K562 (cell line): ENCODE measurements at regions of chr2 and their contacts with region 1.

Region 1: GRCh38 chr2:10122386-10123280 is at the start of gene RRM2:
- DNase-seq: peak; percentile 95 to 98 (median 96)
- ATAC-seq: peak; percentile 87
- H3K4me3 ChIP-seq: peak within 1 kb of the TSS; percentile 84
- H3K27ac ChIP-seq: peak within 1 kb of the TSS; percentile 99
- H3K4me1 ChIP-seq: peaks cover 24 to 29% of the 10 kb centered on the region in 2 experiments
- H3K27me3 ChIP-seq: no peaks in the 10 kb centered on the region
- CTCF ChIP-seq: no peak
- EP300 ChIP-seq: no peak
- POLR2A ChIP-seq: peak; percentile 99
- RAD21 ChIP-seq: no peak
- polyA plus RNA-seq, gene RRM2: 50.1 to 50.7 TPM

Region 2: DNA sequence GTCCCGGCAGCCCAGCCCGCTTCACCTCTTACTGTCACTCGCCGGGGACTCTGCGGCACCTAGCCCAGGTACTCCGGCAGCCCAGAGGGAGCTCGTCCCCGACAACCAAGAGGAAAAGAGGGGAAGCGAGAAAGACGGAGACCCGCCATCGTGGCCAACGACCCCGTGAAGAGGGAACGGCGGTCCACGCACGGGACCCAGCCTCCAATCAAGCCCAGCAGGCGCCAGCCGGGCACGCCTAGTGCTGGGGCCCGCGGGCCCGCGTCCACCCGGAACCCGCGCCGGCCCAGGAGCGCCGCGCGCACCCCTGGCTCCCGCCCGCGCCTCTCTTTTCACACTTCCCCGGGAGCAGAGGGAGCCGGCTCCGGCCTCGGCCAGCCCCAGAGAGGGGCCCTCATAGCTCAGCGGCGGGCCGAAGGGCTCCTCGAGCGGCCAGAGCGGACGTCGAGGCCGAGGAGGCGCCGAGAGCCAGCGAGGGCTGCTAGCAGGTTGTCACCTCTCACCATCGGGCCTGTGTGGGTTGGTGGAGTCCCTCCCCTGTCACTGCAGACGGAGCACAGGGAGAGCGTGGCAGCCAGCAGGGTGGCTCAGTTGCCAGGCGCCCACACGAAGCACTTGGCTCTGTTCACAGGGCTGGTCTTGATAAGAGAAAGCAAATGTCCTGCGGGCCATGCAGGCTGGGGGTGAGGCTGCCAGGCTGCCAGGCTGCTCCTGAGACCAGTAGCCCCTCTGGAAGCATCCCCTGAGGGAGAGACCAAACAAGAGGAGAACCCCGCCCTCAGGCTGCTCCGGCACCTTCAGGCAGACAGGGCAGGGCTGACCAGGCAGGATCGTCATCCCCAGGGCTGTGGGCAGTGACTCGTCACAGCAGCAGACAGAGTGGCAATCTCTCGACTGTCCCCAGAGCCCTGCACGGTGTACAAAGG is 116.1 kb before region 1 on chr2:
- CTCF ChIA-PET with region 1: no interaction called
- POLR2A ChIA-PET with region 1: no interaction called
- in situ Hi-C with region 1: no loop called
- intact Hi-C with region 1: no loop called
- DNase-seq: no peak
- ATAC-seq: no peak
- H3K4me3 ChIP-seq: no peak overlapping the region
- H3K27ac ChIP-seq: no peak overlapping the region
- H3K4me1 ChIP-seq: peaks cover 8 to 37% of the 10 kb centered on the region in 2 experiments
- H3K27me3 ChIP-seq: no peaks in the 10 kb centered on the region
- CTCF ChIP-seq: no peak
- EP300 ChIP-seq: no peak
- POLR2A ChIP-seq: no peak
- RAD21 ChIP-seq: no peak

Region 3: DNA sequence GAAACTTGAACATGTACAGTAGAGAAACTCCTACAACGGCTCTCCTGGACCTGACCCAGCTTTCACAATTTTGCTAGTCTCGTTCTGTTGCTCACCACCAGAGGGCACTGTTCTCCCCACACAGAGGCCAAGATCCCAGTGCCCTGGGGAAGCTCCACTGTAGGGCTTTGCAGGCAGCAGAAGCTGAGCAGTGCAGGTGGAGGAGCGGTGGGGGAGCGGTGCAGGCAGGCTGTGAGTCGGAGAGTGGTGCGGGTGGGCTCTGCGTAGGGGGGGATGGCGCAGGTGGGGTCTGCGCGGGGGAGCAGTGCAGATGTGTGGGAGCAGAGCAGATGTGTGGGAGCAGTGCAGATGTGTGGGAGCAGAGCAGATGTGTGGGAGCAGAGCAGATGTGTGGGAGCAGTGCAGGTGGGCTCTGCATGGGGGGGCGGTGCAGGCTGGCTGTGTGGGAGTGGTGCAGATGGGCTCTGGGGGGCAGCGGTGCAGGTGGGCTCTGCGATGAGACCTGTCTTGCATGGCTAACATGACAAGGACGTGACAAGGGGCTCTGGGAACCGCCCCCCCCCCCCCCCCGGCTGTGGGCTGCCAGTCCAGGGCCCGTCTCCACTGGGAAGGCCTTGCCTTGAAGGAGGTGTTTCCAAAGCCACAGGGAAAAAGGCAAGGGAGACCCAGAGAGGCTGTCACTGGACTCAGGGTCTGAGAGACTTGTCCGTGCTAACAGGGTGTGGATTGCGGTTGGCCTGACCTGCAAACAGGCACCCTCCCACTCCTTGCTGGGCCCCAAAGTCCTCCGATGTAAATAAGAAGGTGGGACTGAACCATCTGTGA is 49.8 kb before region 1 on chr2:
- CTCF ChIA-PET with region 1: interaction called, 4 read pairs
- POLR2A ChIA-PET with region 1: interaction called, 11 read pairs
- in situ Hi-C with region 1: no loop called
- intact Hi-C with region 1: loop called (anchors 2 kb)
- DNase-seq: peak; percentile 82 to 90 (median 84)
- ATAC-seq: peak; percentile 97
- H3K4me3 ChIP-seq: no peak overlapping the region
- H3K27ac ChIP-seq: no peak overlapping the region
- H3K4me1 ChIP-seq: peaks cover 2 to 11% of the 10 kb centered on the region in 2 experiments; a peak in 3 of 5 replicates
- H3K27me3 ChIP-seq: peaks cover 30 to 40% of the 10 kb centered on the region in 2 experiments
- CTCF ChIP-seq: peak; percentile 92 to 93 (median 93)
- EP300 ChIP-seq: no peak; the same call in 1 of the 2 replicates
- POLR2A ChIP-seq: no peak
- RAD21 ChIP-seq: peak; percentile 77 to 89

Region 4: DNA sequence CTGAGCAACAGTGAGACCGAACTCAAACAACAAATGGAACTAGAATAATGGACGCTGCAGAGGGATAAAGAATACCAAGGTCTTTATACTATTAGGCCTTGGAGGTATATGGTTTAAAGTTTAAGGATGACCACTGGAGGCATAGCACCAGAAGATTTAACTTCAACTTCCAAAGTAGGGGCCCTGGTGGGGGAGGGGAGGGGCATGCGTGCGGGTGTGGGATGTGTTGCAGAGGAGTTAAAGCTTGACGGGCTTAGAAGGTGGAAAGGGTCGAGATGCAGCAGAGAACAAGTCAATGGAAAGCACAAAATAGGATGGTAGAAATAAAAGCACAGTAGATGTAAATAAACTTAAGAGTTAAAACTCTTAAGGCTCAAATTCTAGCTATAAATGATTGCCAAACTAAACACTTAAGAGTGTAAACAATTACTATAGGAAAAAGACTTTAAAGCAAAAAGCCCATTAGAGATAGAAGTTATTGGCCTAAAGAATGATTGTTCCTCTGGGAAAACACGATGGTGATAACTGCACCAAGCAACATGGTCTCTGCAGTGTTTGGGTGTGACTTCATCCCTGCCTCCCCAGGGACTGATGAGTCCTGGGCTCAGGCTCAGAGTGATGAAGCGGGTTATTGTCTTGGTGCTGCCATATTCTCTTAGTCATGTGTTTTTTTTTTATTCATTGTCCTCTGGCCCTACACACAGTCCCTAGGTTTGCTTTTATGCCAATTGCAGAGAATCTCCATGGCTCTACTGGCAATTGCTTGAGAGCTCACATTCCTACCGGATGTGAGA is 12.9 kb after region 1 on chr2:
- CTCF ChIA-PET with region 1: no interaction called
- POLR2A ChIA-PET with region 1: interaction called, 44 read pairs
- in situ Hi-C with region 1: no loop called
- intact Hi-C with region 1: no loop called
- DNase-seq: peak; percentile 38 to 53 (median 48)
- ATAC-seq: peak; percentile 33
- H3K4me3 ChIP-seq: no peak overlapping the region
- H3K27ac ChIP-seq: no peak overlapping the region
- H3K4me1 ChIP-seq: peaks cover 15 to 28% of the 10 kb centered on the region in 2 experiments; a peak in 4 of 5 replicates
- H3K27me3 ChIP-seq: no peaks in the 10 kb centered on the region
- CTCF ChIP-seq: peak in 1 of 3 experiments; percentile 2; a peak in 1 of 6 replicates
- EP300 ChIP-seq: no peak
- POLR2A ChIP-seq: peak; percentile 67
- RAD21 ChIP-seq: no peak

Region 5: GRCh38 chr2:10201201-10201600 is 78.6 kb after region 1 on chr2:
- CTCF ChIA-PET with region 1: no interaction called
- POLR2A ChIA-PET with region 1: no interaction called
- in situ Hi-C with region 1: no loop called
- intact Hi-C with region 1: no loop called
- DNase-seq: no peak
- ATAC-seq: no peak
- H3K4me3 ChIP-seq: no peak overlapping the region
- H3K27ac ChIP-seq: no peak overlapping the region
- H3K4me1 ChIP-seq: peaks cover 0 to 2% of the 10 kb centered on the region in 2 experiments; a peak in 2 of 5 replicates
- H3K27me3 ChIP-seq: no peaks in the 10 kb centered on the region
- CTCF ChIP-seq: no peak
- EP300 ChIP-seq: no peak
- POLR2A ChIP-seq: no peak
- RAD21 ChIP-seq: no peak

Region 6: GRCh38 chr2:10302479-10303180 is 180.0 kb after region 1 on chr2 and contains the start of gene HPCAL1:
- CTCF ChIA-PET with region 1: interaction called, 4 read pairs
- POLR2A ChIA-PET with region 1: interaction called, 3 read pairs
- in situ Hi-C with region 1: no loop called
- intact Hi-C with region 1: loop called (anchors 5 kb)
- DNase-seq: peak; percentile 94 to 97 (median 96)
- ATAC-seq: peak; percentile 95
- H3K4me3 ChIP-seq: peak within 1 kb of the TSS; percentile 80
- H3K27ac ChIP-seq: peak within 1 kb of the TSS; percentile 94
- H3K4me1 ChIP-seq: peaks cover 51 to 56% of the 10 kb centered on the region in 2 experiments
- H3K27me3 ChIP-seq: no peaks in the 10 kb centered on the region
- CTCF ChIP-seq: peak; percentile 67 to 87 (median 78)
- EP300 ChIP-seq: peak; percentile 36
- POLR2A ChIP-seq: peak; percentile 36; the same call in 1 of the 2 replicates
- RAD21 ChIP-seq: peak; percentile 52 to 67
- polyA plus RNA-seq, gene HPCAL1: 2.7 to 3.1 TPM

Region 7: GRCh38 chr2:10659898-10660568 is 537.4 kb after region 1 on chr2:
- CTCF ChIA-PET with region 1: interaction called, 5 read pairs
- POLR2A ChIA-PET with region 1: no interaction called
- in situ Hi-C with region 1: no loop called
- intact Hi-C with region 1: loop called (anchors 1 kb)
- DNase-seq: peak; percentile 55 to 76 (median 67)
- ATAC-seq: peak; percentile 98
- H3K4me3 ChIP-seq: no peak overlapping the region
- H3K27ac ChIP-seq: no peak overlapping the region
- H3K4me1 ChIP-seq: peaks cover 0 to 3% of the 10 kb centered on the region in 2 experiments; a peak in 1 of 5 replicates
- H3K27me3 ChIP-seq: no peaks in the 10 kb centered on the region
- CTCF ChIP-seq: peak; percentile 68 to 93 (median 83)
- EP300 ChIP-seq: no peak
- POLR2A ChIP-seq: no peak
- RAD21 ChIP-seq: peak; percentile 83 to 89